ENCODE measurements at regions of chr15 and their contacts with region 1.

Region 1: GRCh38 chr15:93523481-93523880 is 434.5 kb upstream of the RGMA start:
- DNase-seq: no peak
- H3K4me3 Mint-ChIP-seq: no peak overlapping the region
- H3K27ac Mint-ChIP-seq: no peak overlapping the region
- H3K4me1 Mint-ChIP-seq: no peaks in the 10 kb centered on the region
- H3K27me3 Mint-ChIP-seq: peaks cover 15% of the 10 kb centered on the region
- CTCF ChIP-seq: no peak

Region 2: GRCh38 chr15:93543094-93543493 is 19.6 kb after region 1 on chr15:
- CTCF ChIA-PET with region 1: no interaction called
- intact Hi-C with region 1: loop called (anchors 1 kb)
- DNase-seq: no peak
- H3K4me3 Mint-ChIP-seq: no peak overlapping the region
- H3K27ac Mint-ChIP-seq: no peak overlapping the region
- H3K4me1 Mint-ChIP-seq: no peaks in the 10 kb centered on the region
- H3K27me3 Mint-ChIP-seq: no peaks in the 10 kb centered on the region
- CTCF ChIP-seq: no peak

Measured in Calu3 (cell line).